Heart left ventricle (tissue), 16 donors: ENCODE measurements at regions of chr5 and their contacts with region 1.

Region 1: GRCh38 chr5:134436523-134437339 is 25.1 kb upstream of the CDKN2AIPNL start:
- DNase-seq: peak; percentile 46 to 90 (median 73)
- ATAC-seq: peak; percentile 74 to 89 (median 85)
- H3K4me3 ChIP-seq: peak overlapping the region in 5 of 12 donors; percentile 19 to 30 (median 24)
- H3K27ac ChIP-seq: peak overlapping the region; percentile 41 to 95 (median 84)
- H3K4me1 ChIP-seq: peaks cover 18 to 40% (median 37%) of the 10 kb centered on the region in 12 donors
- H3K27me3 ChIP-seq: no peaks in the 10 kb centered on the region
- CTCF ChIP-seq: no peak
- POLR2A ChIP-seq: no peak

Region 2: DNA sequence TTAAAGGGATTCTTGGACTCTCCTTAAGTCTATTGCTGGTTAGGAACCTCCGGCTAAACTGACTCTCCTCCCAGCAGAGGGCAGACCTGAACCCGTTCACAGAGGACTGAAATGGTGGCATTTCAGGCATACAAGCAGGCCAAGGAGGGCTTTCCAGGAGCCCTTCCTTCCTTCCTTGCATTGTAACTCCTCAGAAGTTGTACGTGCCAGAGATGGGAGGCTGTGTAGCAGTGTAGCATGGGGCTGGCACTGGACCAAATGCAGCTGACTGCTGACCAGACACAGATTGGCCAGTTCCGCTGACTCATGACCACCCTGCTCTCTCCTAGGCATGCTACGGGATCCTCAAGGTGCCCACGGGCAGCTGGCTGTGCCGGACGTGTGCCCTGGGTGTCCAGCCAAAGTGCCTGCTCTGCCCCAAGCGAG is 125.2 kb after region 1 on chr5:
- intact Hi-C with region 1: loop called in 1 of 10 experiments (anchors 10 kb)
- DNase-seq: peak in 4 of 5 donors; percentile 59 to 85 (median 74)
- ATAC-seq: peak; percentile 38 to 83 (median 76)
- H3K4me3 ChIP-seq: no peak overlapping the region
- H3K27ac ChIP-seq: peak overlapping the region in 9 of 12 donors; percentile 12 to 56 (median 24)
- H3K4me1 ChIP-seq: peaks cover 0 to 32% (median 19%) of the 10 kb centered on the region in 12 donors
- H3K27me3 ChIP-seq: no peaks in the 10 kb centered on the region
- CTCF ChIP-seq: peak; percentile 14 to 61 (median 43)
- POLR2A ChIP-seq: no peak